ENCODE measurements at regions of chr10 and their contacts with region 1.

Region 1: DNA sequence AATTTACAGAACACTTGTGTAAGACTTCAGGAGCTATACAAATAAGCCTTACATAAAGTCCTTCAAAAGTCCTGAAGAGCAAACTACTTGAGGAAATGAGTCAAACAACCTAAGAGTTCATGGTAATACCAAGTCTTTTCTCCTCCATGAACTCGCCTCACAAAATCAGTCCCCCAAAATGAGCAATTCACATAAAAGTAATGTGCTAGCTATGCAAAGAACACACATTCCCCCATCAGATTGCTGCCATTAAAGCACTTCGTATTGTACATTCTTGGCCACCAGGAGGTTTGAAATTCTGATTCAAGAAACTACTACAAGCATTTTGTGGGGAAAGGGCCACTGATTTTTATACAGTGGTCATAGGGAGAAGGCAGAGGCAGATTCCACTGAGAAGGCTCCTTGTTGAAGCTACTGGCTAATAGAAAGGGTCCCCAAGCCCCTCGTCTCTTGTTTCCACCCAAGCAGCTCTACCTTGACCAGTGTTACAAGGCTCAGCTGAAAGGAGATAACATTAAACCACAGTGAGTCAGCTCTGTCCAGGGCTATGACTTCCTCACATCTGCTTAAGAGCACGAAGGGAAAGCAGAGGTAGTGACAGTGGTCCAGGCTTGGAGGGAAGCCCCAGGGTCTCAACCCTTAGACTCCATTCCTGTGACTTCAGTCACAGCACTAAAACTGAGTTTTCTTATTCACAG is 115.2 kb upstream of the CDK1 start:
- DNase-seq: no peak
- H3K4me3 ChIP-seq: no peak overlapping the region
- H3K27ac ChIP-seq: no peak overlapping the region
- H3K4me1 ChIP-seq: peaks cover 19% of the 10 kb centered on the region; the same call in 1 of the 2 replicates
- H3K27me3 ChIP-seq: no peaks in the 10 kb centered on the region
- CTCF ChIP-seq: no peak

Region 2: DNA sequence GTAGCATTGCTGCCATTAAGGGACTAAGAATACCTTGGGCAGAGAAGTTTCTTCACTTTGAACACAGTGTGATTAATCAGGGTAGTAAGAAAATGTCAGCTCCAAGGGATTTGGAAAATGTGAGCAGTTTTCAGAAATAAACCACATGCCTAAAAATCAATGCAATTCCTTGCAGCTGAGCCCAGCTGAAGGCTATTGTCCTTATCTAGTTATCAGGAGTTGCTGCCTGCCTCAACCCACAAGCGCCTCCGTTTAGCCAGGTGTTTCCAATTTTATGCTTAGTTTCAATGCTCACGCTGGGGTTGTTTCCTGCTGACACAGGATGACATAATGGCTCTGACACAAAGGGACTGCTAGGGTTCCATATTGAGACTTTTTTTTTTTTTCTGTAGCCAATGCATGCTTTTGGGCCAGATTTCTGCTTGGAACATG is 141.1 kb before region 1 on chr10:
- CTCF ChIA-PET with region 1: no interaction called
- POLR2A ChIA-PET with region 1: no interaction called
- intact Hi-C with region 1: no loop called
- DNase-seq: peak in 1 of 2 experiments; percentile 14
- H3K4me3 ChIP-seq: no peak overlapping the region
- H3K27ac ChIP-seq: no peak overlapping the region
- H3K4me1 ChIP-seq: no peaks in the 10 kb centered on the region
- H3K27me3 ChIP-seq: no peaks in the 10 kb centered on the region
- CTCF ChIP-seq: no peak

Region 3: GRCh38 chr10:60646966-60647796 is 15.9 kb before region 1 on chr10:
- CTCF ChIA-PET with region 1: no interaction called
- POLR2A ChIA-PET with region 1: no interaction called
- intact Hi-C with region 1: no loop called
- DNase-seq: peak in 1 of 2 experiments; percentile 49
- H3K4me3 ChIP-seq: no peak overlapping the region
- H3K27ac ChIP-seq: no peak overlapping the region
- H3K4me1 ChIP-seq: peaks cover 13% of the 10 kb centered on the region
- H3K27me3 ChIP-seq: no peaks in the 10 kb centered on the region
- CTCF ChIP-seq: peak; percentile 92

Region 4: DNA sequence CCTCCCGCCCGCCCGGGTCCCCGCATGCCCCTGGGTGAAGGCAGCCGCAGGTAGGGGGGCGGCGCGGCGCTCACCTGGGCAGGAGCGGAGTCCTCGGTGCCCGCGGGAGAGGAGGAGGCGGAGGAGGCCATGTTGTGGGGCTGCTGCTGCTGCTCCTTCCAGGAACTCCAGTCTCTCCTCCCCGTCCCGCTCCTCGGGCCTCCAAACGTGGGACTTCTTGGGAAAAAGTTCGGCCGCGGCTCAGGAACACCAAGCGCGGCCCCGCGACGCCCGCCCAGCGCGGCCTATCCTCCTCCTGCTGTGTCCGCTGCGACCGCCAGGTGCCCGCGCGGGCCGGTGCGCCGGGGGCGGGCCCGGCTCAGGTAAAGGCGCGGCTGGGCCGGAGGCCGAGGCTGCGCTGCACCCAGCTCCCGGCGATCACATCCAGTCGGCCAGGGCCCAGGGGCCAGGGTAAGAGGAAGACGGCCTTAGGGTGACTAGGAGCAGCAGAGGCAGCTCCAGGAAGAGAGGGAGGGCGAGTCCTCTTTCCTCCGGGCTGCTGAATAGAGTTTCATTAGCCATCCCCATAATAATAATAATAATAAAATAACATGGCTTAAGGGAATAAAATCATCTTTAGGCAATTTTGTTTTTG is 70.2 kb after region 1 on chr10:
- CTCF ChIA-PET with region 1: no interaction called
- POLR2A ChIA-PET with region 1: interaction called, 3 read pairs
- intact Hi-C with region 1: loop called (anchors 5 kb)
- DNase-seq: peak; percentile 60 to 80
- H3K4me3 ChIP-seq: peak overlapping the region; percentile 70
- H3K27ac ChIP-seq: no peak overlapping the region
- H3K4me1 ChIP-seq: peaks cover 39% of the 10 kb centered on the region
- H3K27me3 ChIP-seq: no peaks in the 10 kb centered on the region
- CTCF ChIP-seq: peak; percentile 61; the same call in 1 of the 2 replicates

Measured in PC-9 (cell line).